ENCODE measurements at regions of chr7 and their contacts with region 1.

Region 1: GRCh38 chr7:97872025-97872669 is at the start of gene ASNS:
- DNase-seq: peak; percentile 83 to 97
- H3K4me3 ChIP-seq: peak within 1 kb of the TSS; percentile 70
- CTCF ChIP-seq: no peak
- POLR2A ChIP-seq: no peak
- total RNA-seq, gene ASNS: 5.9 to 13.0 (median 8.3) TPM

Region 2: GRCh38 chr7:97734255-97734654 is 137.9 kb before region 1 on chr7:
- intact Hi-C with region 1: no loop called
- DNase-seq: no peak
- H3K4me3 ChIP-seq: no peak overlapping the region
- CTCF ChIP-seq: no peak
- POLR2A ChIP-seq: no peak

Region 3: GRCh38 chr7:97971990-97972943 is 100.1 kb after region 1 on chr7:
- intact Hi-C with region 1: loop called (anchors 5 kb)
- DNase-seq: peak; percentile 70 to 95
- H3K4me3 ChIP-seq: peak overlapping the region; percentile 99
- CTCF ChIP-seq: no peak
- POLR2A ChIP-seq: no peak